ENCODE measurements at regions of chr6 and their contacts with region 1.

Region 1: GRCh38 chr6:39302669-39303424 is 11.4 kb downstream of the KCNK17 start:
- DNase-seq: no peak
- H3K4me3 ChIP-seq: no peak overlapping the region
- H3K27me3 ChIP-seq: no peaks in the 10 kb centered on the region; the same call in 1 of the 2 replicates
- CTCF ChIP-seq: peak; percentile 84

Region 2: GRCh38 chr6:38871741-38872568 is 430.9 kb before region 1 on chr6:
- CTCF ChIA-PET with region 1: interaction called, 49 read pairs
- POLR2A ChIA-PET with region 1: no interaction called
- DNase-seq: peak; percentile 4
- H3K4me3 ChIP-seq: no peak overlapping the region
- H3K27me3 ChIP-seq: no peaks in the 10 kb centered on the region; the same call in 1 of the 2 replicates
- CTCF ChIP-seq: peak; percentile 95

Region 3: DNA sequence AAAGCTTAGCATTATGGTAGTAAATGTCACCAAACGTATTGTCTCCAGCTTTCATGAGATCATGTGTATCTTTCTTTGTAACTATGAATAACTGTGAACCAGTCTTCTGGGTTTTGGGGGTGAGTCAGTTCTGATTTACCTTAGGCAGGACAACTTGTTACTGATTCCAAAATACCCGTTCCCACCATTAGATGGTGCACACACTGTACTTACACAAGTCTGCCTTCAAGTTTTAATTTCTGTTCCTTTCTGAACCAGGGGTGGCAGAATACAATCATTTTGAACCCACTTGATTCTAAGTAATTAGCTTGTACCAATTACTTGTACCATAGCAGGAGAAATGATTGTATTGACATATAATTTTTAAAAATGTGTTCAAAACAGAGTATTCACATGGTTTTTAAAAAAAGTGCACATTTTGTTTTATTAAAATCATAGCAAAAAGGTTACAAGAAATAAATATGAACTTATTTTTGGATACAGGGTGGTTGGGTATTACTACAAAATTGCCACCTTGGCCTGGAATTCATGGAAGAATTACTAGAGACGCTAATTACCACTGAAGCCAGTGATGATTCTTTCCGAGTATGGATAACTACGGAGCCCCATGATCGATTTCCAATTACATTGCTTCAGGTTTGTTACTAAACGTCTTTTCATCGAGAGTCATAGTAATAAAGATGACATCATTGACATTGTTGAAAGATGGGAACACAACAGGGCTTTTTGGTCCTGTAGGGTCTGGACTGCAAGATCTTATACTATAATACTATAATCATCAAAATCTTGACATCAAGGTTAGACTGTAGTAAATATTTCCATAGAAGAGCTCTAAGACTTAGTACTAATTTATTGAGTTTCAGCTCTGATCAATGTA is 329.4 kb before region 1 on chr6:
- CTCF ChIA-PET with region 1: interaction called, 50 read pairs
- POLR2A ChIA-PET with region 1: no interaction called
- DNase-seq: peak; percentile 18
- H3K4me3 ChIP-seq: no peak overlapping the region
- H3K27me3 ChIP-seq: no peaks in the 10 kb centered on the region; the same call in 1 of the 2 replicates
- CTCF ChIP-seq: peak; percentile 68

Region 4: DNA sequence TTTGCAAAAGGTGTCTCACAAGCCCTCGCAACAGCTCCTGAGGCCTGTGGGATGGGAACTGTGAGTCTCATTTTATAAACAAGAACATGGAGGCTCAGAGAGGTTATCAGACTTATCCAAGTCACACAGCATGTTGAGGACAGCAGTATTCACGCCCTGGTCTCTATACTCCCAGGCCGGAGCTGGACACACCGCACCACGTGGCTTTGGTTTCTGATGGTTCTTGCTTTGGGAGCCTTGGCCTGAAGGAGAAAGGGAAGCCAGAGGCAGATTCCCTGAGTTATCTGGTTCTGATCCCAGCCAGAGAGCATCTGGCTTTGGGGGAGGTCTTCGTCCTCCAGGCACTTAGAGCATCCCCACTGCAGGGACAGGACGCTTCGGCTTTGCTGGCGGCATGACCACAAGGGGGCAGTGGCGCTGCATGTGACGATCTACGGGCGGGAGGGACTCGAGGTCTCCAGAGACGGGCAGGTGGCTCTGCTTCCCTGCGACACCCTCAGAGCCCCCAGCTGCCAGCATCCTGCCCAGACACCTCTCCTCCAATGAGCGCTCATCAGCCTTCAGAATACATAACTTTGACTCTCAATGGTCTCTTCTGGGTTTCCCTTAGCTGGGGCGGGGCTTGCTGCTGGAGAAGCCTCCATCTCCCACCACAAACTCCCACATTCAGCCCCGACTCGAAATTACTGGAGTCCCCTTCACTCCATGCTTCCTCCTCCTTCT is 136.5 kb before region 1 on chr6:
- CTCF ChIA-PET with region 1: interaction called, 136 read pairs
- POLR2A ChIA-PET with region 1: no interaction called
- DNase-seq: no peak
- H3K4me3 ChIP-seq: no peak overlapping the region
- H3K27me3 ChIP-seq: no peaks in the 10 kb centered on the region; the same call in 1 of the 2 replicates
- CTCF ChIP-seq: peak; percentile 86

Region 5: DNA sequence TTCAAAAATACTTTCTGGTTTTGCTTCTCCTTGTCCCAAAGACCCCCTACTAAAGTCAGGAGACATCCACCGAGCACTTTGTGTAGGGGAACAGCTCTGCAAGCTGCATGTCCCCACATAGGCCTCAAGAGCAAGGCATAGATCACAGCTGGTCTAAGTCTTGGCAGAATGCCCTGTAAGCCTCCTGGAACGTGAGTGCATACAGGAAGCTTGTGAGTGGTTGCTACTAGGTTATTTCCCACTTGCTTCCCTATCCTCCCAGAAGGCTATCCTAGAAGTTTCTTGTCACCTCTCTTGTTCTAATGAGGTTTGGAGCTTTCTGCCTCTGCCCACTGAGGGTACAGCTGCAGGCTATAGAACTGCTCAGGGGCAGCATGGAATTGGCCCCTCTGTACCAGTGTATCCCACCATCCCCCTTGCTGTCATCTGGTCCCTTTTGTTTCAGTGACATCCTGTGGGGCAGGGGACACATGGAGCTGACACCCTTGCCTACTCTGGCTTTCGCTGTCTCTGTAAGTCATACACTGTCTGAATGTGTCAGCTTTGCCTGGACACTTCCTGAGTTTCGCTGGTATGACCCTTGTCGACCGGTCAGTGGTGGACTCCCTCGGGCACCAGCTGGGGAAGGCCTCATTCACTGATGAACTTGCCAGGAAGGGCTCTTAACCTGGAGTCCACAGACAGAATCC is 55.3 kb after region 1 on chr6:
- CTCF ChIA-PET with region 1: no interaction called
- POLR2A ChIA-PET with region 1: no interaction called
- DNase-seq: no peak
- H3K4me3 ChIP-seq: no peak overlapping the region
- H3K27me3 ChIP-seq: 0 out of 2 replicates have a peak, but pooled peaks cover 2% of the 10 kb centered on the region
- CTCF ChIP-seq: no peak

Region 6: GRCh38 chr6:39622690-39623089 is 319.8 kb after region 1 on chr6:
- CTCF ChIA-PET with region 1: no interaction called
- POLR2A ChIA-PET with region 1: no interaction called
- DNase-seq: no peak
- H3K4me3 ChIP-seq: no peak overlapping the region
- H3K27me3 ChIP-seq: no peaks in the 10 kb centered on the region; the same call in 1 of the 2 replicates
- CTCF ChIP-seq: no peak

Measured in BJ (cell line).